AG04449 (cell line): ENCODE measurements at regions of chr2 and their contacts with region 1.

Region 1: DNA sequence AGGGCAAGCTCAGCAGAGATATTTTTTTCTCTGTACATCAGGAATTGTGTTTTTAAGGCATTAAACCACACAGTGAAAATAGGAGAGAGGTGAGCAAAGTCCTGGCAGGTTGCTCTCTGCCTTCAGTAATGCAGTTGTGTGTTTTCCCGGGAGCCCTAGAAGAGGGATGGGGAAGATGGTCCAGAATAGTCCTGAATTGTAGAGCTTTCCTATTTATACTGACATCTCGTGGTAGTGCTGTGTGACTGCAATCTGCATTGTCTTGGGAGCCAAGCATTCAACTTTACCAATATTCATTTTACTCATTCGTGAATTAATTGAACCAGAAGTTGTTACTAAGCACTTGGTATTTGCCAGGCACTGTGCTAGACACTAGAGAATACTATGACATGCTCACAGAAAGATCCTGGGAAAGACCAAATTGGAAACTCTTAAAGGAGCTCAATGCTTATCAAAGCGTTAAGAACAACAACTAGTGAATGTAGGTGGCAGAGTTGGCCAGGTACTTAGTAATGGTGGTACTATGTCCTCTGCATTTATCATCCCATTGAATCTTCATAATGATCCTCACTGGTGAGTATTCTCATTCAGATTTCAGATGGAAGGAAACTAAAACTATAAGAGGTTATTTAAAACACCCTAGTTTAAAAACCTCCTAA is 214.6 kb downstream of the TRIB2 start:
- DNase-seq: no peak
- H3K4me3 ChIP-seq: no peak overlapping the region
- CTCF ChIP-seq: peak; percentile 74

Region 2: GRCh38 chr2:11829947-11830707 is 1101.2 kb before region 1 on chr2:
- CTCF ChIA-PET with region 1: interaction called, 12 read pairs
- POLR2A ChIA-PET with region 1: no interaction called
- DNase-seq: peak; percentile 93
- H3K4me3 ChIP-seq: peak overlapping the region; percentile 40
- CTCF ChIP-seq: peak; percentile 37

Region 3: GRCh38 chr2:12728221-12728777 is 203.0 kb before region 1 on chr2:
- CTCF ChIA-PET with region 1: interaction called, 181 read pairs
- POLR2A ChIA-PET with region 1: no interaction called
- DNase-seq: no peak
- H3K4me3 ChIP-seq: no peak overlapping the region
- CTCF ChIP-seq: no peak

Region 4: DNA sequence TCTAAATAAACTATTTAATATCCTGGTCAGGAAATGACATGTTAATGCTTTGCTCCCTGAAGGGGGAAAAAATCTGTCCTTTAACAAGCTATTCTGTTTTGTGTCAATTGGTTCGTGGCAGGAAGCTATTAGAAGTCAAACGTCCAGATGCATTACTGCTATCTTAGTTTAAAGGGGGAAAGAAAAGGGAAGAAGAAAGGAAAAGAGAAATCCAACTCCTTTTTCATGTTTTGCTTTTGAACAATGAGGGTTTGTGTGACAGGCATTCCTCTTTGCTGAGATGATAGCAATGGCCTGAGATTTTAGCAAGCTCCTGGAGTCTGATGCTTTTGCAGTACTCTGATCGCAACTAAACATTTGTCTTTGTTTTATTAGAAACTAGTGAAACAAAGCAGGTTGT is 189.9 kb before region 1 on chr2:
- CTCF ChIA-PET with region 1: interaction called, 23 read pairs
- POLR2A ChIA-PET with region 1: no interaction called
- DNase-seq: no peak
- H3K4me3 ChIP-seq: no peak overlapping the region
- CTCF ChIP-seq: no peak

Region 5: GRCh38 chr2:12778369-12778768 is 152.9 kb before region 1 on chr2:
- CTCF ChIA-PET with region 1: interaction called, 12 read pairs
- POLR2A ChIA-PET with region 1: no interaction called
- DNase-seq: no peak
- H3K4me3 ChIP-seq: no peak overlapping the region
- CTCF ChIP-seq: no peak

Region 6: DNA sequence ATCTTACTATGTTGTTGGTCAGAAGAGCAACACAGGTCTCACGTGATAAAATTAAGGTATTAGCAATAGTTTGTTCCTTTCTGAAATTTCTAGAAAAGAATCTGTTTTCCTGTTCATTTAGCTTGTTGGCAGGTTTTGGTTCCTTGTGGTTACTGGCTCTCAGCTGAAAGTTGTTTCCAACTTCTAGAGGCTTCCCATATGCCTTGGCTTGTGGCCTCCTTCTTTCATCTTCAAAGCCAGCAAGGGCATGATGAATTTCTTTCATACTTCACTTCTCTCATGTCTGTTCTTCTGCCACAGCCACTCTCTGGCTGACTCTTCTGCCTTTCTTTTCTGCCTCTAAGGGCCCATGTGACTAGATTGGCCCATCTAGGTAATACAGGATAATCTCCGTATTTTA is 20.9 kb before region 1 on chr2:
- CTCF ChIA-PET with region 1: interaction called, 11 read pairs
- POLR2A ChIA-PET with region 1: no interaction called
- DNase-seq: no peak
- H3K4me3 ChIP-seq: no peak overlapping the region
- CTCF ChIP-seq: no peak

Region 7: GRCh38 chr2:12957251-12957650 is 25.9 kb after region 1 on chr2:
- CTCF ChIA-PET with region 1: interaction called, 22 read pairs
- POLR2A ChIA-PET with region 1: no interaction called
- DNase-seq: no peak
- H3K4me3 ChIP-seq: no peak overlapping the region
- CTCF ChIP-seq: no peak

Region 8: GRCh38 chr2:13230221-13230620 is 298.9 kb after region 1 on chr2:
- CTCF ChIA-PET with region 1: no interaction called
- POLR2A ChIA-PET with region 1: no interaction called
- DNase-seq: no peak
- H3K4me3 ChIP-seq: no peak overlapping the region
- CTCF ChIP-seq: no peak